ENCODE measurements at regions of chr5 and their contacts with region 1.

Region 1: GRCh38 chr5:170434966-170435605 is 45.9 kb upstream of the KCNMB1 start:
- DNase-seq: peak; percentile 40 to 72
- ATAC-seq: peak; percentile 74 to 93 (median 79)
- H3K4me3 ChIP-seq: no peak overlapping the region
- H3K4me3 Mint-ChIP-seq: no peak overlapping the region
- H3K27ac ChIP-seq: no peak overlapping the region
- H3K27ac Mint-ChIP-seq: no peak overlapping the region
- H3K4me1 ChIP-seq: peaks cover 3% of the 10 kb centered on the region
- H3K4me1 Mint-ChIP-seq: no peaks in the 10 kb centered on the region
- H3K27me3 ChIP-seq: no peaks in the 10 kb centered on the region
- H3K27me3 Mint-ChIP-seq: peaks cover 3 to 6% of the 10 kb centered on the region in 2 donors
- CTCF ChIP-seq: peak; percentile 85

Region 2: GRCh38 chr5:170633235-170634081 is 198.4 kb after region 1 on chr5:
- intact Hi-C with region 1: loop called (anchors 1 kb)
- DNase-seq: no peak
- ATAC-seq: peak in 1 of 3 donors; percentile 43
- H3K4me3 ChIP-seq: no peak overlapping the region
- H3K4me3 Mint-ChIP-seq: peak overlapping the region; percentile 79
- H3K27ac ChIP-seq: no peak overlapping the region
- H3K27ac Mint-ChIP-seq: peak overlapping the region in 1 of 2 donors; percentile 79
- H3K4me1 ChIP-seq: peaks cover 16% of the 10 kb centered on the region
- H3K4me1 Mint-ChIP-seq: peaks cover 21 to 22% of the 10 kb centered on the region in 2 donors
- H3K27me3 ChIP-seq: no peaks in the 10 kb centered on the region
- H3K27me3 Mint-ChIP-seq: peaks cover 7 to 24% of the 10 kb centered on the region in 2 donors
- CTCF ChIP-seq: peak; percentile 26